ENCODE measurements at regions of chr2 and their contacts with region 1.

Region 1: GRCh38 chr2:73828818-73829570 is at the start of gene STAMBP:
- DNase-seq: peak; percentile 97
- ATAC-seq: peak; percentile 98 to 99 (median 98)
- H3K4me3 ChIP-seq: peak within 1 kb of the TSS; percentile 68 to 97 (median 86)
- H3K27ac ChIP-seq: peak within 1 kb of the TSS; percentile 88 to 99 (median 95)
- H3K4me1 ChIP-seq: peaks cover 0 to 40% (median 17%) of the 10 kb centered on the region in 12 donors
- H3K27me3 ChIP-seq: no peaks in the 10 kb centered on the region
- CTCF ChIP-seq: no peak
- POLR2A ChIP-seq: peak; percentile 52 to 75
- total RNA-seq, gene STAMBP: 27.2 to 38.0 (median 34.4) TPM

Region 2: GRCh38 chr2:73779467-73780236 is 49.3 kb before region 1 on chr2 and contains the start of gene DUSP11:
- intact Hi-C with region 1: no loop called
- DNase-seq: peak; percentile 91 to 97 (median 95)
- ATAC-seq: peak; percentile 96 to 100 (median 100)
- H3K4me3 ChIP-seq: peak within 1 kb of the TSS; percentile 63 to 94 (median 84)
- H3K27ac ChIP-seq: peak within 1 kb of the TSS; percentile 75 to 96 (median 91)
- H3K4me1 ChIP-seq: peaks cover 0 to 30% (median 13%) of the 10 kb centered on the region in 12 donors
- H3K27me3 ChIP-seq: no peaks in the 10 kb centered on the region
- CTCF ChIP-seq: peak; percentile 87 to 99 (median 93)
- POLR2A ChIP-seq: peak in 1 of 2 donors; percentile 85
- total RNA-seq, gene DUSP11: 6.7 to 13.8 (median 11.0) TPM

Region 3: GRCh38 chr2:73920577-73921545 is 91.9 kb after region 1 on chr2:
- intact Hi-C with region 1: loop called in 1 of 10 experiments (anchors 5 kb)
- DNase-seq: no peak
- ATAC-seq: peak in 2 of 4 donors; percentile 33 to 53
- H3K4me3 ChIP-seq: no peak overlapping the region
- H3K27ac ChIP-seq: peak overlapping the region in 1 of 12 donors; percentile 42
- H3K4me1 ChIP-seq: peaks cover 0 to 2% (median 0%) of the 10 kb centered on the region in 12 donors
- H3K27me3 ChIP-seq: peaks cover 0 to 16% (median 0%) of the 10 kb centered on the region in 9 donors
- CTCF ChIP-seq: peak in 4 of 12 donors; percentile 7 to 27 (median 8)
- POLR2A ChIP-seq: no peak

Region 4: DNA sequence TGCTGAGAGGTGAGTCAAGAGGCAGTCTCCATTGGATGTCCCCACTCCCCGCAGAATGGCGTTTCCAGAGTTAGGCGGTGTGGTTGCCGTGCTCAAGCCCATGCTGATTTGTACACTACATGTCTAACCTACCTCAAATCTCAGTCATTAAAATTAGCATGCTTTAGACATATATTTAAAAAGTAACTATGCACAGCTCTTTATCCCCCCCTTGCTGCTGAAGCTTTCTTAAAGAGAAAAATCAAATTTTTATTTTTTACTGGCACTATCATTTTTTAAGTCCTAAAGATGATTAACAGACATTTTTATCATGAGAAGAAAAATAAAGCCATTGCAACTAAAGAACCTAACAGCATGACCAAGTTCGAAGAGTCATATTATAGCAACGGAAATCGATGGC is 275.8 kb after region 1 on chr2:
- intact Hi-C with region 1: loop called in 1 of 10 experiments (anchors 10 kb)
- DNase-seq: no peak
- ATAC-seq: no peak
- H3K4me3 ChIP-seq: no peak overlapping the region
- H3K27ac ChIP-seq: no peak overlapping the region
- H3K4me1 ChIP-seq: peaks cover 0 to 2% (median 0%) of the 10 kb centered on the region in 12 donors
- H3K27me3 ChIP-seq: no peaks in the 10 kb centered on the region
- CTCF ChIP-seq: peak in 7 of 12 donors; percentile 7 to 39 (median 28)
- POLR2A ChIP-seq: no peak

Region 5: GRCh38 chr2:74250189-74250631 is 421.2 kb after region 1 on chr2:
- intact Hi-C with region 1: loop called in 2 of 10 experiments (anchors 10 kb)
- DNase-seq: peak in 2 of 5 donors; percentile 31 to 50
- ATAC-seq: peak in 2 of 4 donors; percentile 38 to 51
- H3K4me3 ChIP-seq: no peak overlapping the region
- H3K27ac ChIP-seq: no peak overlapping the region
- H3K4me1 ChIP-seq: peaks cover 0 to 13% (median 2%) of the 10 kb centered on the region in 12 donors
- H3K27me3 ChIP-seq: no peaks in the 10 kb centered on the region
- CTCF ChIP-seq: peak; percentile 62 to 87 (median 74)
- POLR2A ChIP-seq: no peak

Region 6: GRCh38 chr2:74587664-74588277 is 758.8 kb after region 1 on chr2:
- intact Hi-C with region 1: loop called in 1 of 10 experiments (anchors 10 kb)
- DNase-seq: peak; percentile 48 to 62 (median 60)
- ATAC-seq: peak; percentile 71 to 92 (median 92)
- H3K4me3 ChIP-seq: no peak overlapping the region
- H3K27ac ChIP-seq: no peak overlapping the region
- H3K4me1 ChIP-seq: peaks cover 0 to 37% (median 0%) of the 10 kb centered on the region in 12 donors
- H3K27me3 ChIP-seq: peaks cover 0 to 34% (median 8%) of the 10 kb centered on the region in 9 donors
- CTCF ChIP-seq: peak; percentile 48 to 85 (median 74)
- POLR2A ChIP-seq: no peak

Measured in heart left ventricle (tissue), 16 donors.